ENCODE measurements at regions of chr4 and their contacts with region 1.

Region 1: GRCh38 chr4:7192252-7193029 is at the start of gene SORCS2:
- DNase-seq: peak; percentile 53 to 84 (median 78)
- ATAC-seq: peak; percentile 93
- H3K4me3 ChIP-seq: no peak within 1 kb of the TSS
- H3K27ac ChIP-seq: no peak within 1 kb of the TSS
- H3K4me1 ChIP-seq: peaks cover 0 to 10% of the 10 kb centered on the region in 2 experiments; a peak in 2 of 5 replicates
- H3K27me3 ChIP-seq: peaks cover 24 to 45% of the 10 kb centered on the region in 2 experiments; a peak in 4 of 5 replicates
- CTCF ChIP-seq: peak; percentile 32 to 68 (median 52); a peak in 3 of 6 replicates
- EP300 ChIP-seq: no peak
- POLR2A ChIP-seq: no peak
- RAD21 ChIP-seq: peak in 1 of 2 experiments; percentile 83; a peak in 3 of 4 replicates
- polyA plus RNA-seq, gene SORCS2: not detected

Region 2: GRCh38 chr4:7094916-7095315 is 97.5 kb before region 1 on chr4:
- CTCF ChIA-PET with region 1: no interaction called
- POLR2A ChIA-PET with region 1: no interaction called
- in situ Hi-C with region 1: no loop called
- intact Hi-C with region 1: no loop called
- DNase-seq: no peak
- ATAC-seq: peak; percentile 37; the same call in 2 of the 3 replicates
- H3K4me3 ChIP-seq: no peak overlapping the region
- H3K27ac ChIP-seq: no peak overlapping the region
- H3K4me1 ChIP-seq: peaks cover 0 to 6% of the 10 kb centered on the region in 2 experiments; a peak in 1 of 5 replicates
- H3K27me3 ChIP-seq: peaks cover 44 to 52% of the 10 kb centered on the region in 2 experiments
- CTCF ChIP-seq: no peak
- EP300 ChIP-seq: no peak
- POLR2A ChIP-seq: no peak
- RAD21 ChIP-seq: no peak

Region 3: DNA sequence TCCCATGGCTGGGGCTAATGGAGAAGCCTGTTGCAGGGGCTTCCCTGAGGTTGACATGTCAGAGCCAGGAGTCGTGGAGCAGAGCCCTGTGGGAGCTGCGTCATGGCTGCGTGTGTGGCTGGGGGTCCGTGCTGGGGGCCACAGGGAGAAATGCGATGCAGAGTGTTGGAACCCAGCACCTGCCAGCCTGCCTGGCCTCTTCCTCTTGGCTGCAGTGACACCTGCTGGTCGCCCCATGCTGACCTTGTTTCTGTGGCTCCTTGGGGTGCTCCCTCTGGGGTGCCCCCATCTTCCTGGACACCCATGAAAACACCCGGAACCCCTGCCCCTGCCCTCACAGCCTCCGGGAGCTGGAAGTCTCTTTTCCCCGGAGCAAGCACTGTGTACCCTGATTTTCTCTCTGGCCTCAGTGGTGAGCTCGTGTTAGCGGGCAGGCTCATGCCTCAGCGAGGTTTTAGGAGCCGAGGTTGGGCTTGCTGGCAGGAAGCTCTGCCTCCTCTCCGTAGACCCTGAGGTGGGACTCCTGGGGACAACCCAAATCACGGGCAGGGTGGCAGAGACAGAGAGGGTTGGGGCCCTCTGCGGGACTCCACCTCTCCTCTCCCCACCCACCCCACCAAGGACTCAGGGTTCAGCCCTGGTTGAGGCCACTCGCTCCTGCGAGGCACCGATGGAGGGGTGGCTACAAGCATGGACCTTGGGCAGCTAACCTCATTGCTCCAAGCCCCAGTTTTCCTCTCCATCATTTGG is 103.6 kb after region 1 on chr4:
- CTCF ChIA-PET with region 1: interaction called, 3 read pairs
- POLR2A ChIA-PET with region 1: no interaction called
- in situ Hi-C with region 1: no loop called
- intact Hi-C with region 1: loop called (anchors 10 kb)
- DNase-seq: peak; percentile 35 to 44 (median 36)
- ATAC-seq: peak; percentile 74
- H3K4me3 ChIP-seq: no peak overlapping the region
- H3K27ac ChIP-seq: no peak overlapping the region
- H3K4me1 ChIP-seq: no peaks in the 10 kb centered on the region
- H3K27me3 ChIP-seq: peaks cover 11 to 46% of the 10 kb centered on the region in 2 experiments; a peak in 4 of 5 replicates
- CTCF ChIP-seq: peak; percentile 57 to 68 (median 61)
- EP300 ChIP-seq: no peak
- POLR2A ChIP-seq: no peak
- RAD21 ChIP-seq: peak; percentile 47 to 66

Region 4: GRCh38 chr4:7335344-7336069 is 143.1 kb after region 1 on chr4:
- CTCF ChIA-PET with region 1: interaction called, 3 read pairs
- POLR2A ChIA-PET with region 1: no interaction called
- in situ Hi-C with region 1: no loop called
- intact Hi-C with region 1: loop called (anchors 2 kb)
- DNase-seq: peak; percentile 58 to 78 (median 72)
- ATAC-seq: peak; percentile 94
- H3K4me3 ChIP-seq: no peak overlapping the region
- H3K27ac ChIP-seq: no peak overlapping the region
- H3K4me1 ChIP-seq: peaks cover 0 to 9% of the 10 kb centered on the region in 2 experiments; a peak in 1 of 5 replicates
- H3K27me3 ChIP-seq: peaks cover 0 to 36% of the 10 kb centered on the region in 2 experiments; a peak in 3 of 5 replicates
- CTCF ChIP-seq: peak; percentile 74 to 78 (median 76)
- EP300 ChIP-seq: no peak
- POLR2A ChIP-seq: no peak
- RAD21 ChIP-seq: peak in 1 of 2 experiments; percentile 66; a peak in 2 of 4 replicates

Region 5: GRCh38 chr4:7719354-7720174 is 527.1 kb after region 1 on chr4:
- CTCF ChIA-PET with region 1: no interaction called
- POLR2A ChIA-PET with region 1: no interaction called
- in situ Hi-C with region 1: no loop called
- intact Hi-C with region 1: loop called (anchors 5 kb)
- DNase-seq: peak; percentile 58 to 79 (median 76)
- ATAC-seq: peak; percentile 96
- H3K4me3 ChIP-seq: no peak overlapping the region
- H3K27ac ChIP-seq: no peak overlapping the region
- H3K4me1 ChIP-seq: peaks cover 0 to 9% of the 10 kb centered on the region in 2 experiments; a peak in 1 of 5 replicates
- H3K27me3 ChIP-seq: peaks cover 18 to 42% of the 10 kb centered on the region in 2 experiments
- CTCF ChIP-seq: peak; percentile 69 to 76 (median 74)
- EP300 ChIP-seq: no peak
- POLR2A ChIP-seq: no peak
- RAD21 ChIP-seq: peak; percentile 33 to 68

Region 6: DNA sequence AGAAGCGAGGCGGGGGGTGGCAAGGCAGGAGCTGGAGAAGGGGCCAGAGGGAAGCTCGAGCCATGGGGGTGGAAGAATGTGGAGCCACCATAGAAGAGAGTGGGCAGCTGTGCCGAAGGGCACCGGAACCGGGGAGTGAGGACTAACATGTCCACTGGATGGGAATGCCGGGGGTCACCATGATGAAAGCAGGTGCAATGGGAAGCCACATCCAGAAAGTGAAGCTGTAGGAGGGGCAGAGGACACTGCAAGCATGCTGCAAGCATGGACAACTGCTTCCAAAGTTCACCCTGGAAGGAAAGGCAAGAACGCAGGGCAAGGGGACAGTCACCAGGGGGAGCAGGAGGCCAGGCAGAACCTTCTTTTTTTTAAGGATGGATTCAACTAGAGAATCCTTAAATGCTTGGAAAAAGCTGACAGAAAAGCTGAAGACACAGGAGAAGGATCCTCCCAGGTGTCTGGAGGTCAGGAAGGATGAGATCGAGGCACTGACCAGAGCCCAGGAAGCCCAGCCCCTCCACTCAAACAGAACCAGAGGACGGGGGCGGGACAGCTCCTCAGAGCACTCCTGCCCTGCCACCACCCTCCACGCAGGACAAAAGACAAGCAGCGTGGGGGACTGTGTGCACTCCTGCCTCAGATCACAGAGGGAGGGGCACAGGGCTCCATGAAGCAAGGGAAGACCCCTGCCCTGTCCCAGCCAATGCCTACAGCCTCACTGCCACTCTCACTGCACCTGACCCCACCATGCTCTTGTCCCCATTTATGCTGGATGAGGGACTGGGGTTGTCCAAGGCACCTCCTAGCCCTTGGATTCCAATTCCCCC is 578.0 kb after region 1 on chr4:
- CTCF ChIA-PET with region 1: no interaction called
- POLR2A ChIA-PET with region 1: no interaction called
- in situ Hi-C with region 1: no loop called
- intact Hi-C with region 1: no loop called
- DNase-seq: no peak
- ATAC-seq: no peak
- H3K4me3 ChIP-seq: no peak overlapping the region
- H3K27ac ChIP-seq: no peak overlapping the region
- H3K4me1 ChIP-seq: no peaks in the 10 kb centered on the region; a peak in 1 of 5 replicates
- H3K27me3 ChIP-seq: no peaks in the 10 kb centered on the region; a peak in 1 of 5 replicates
- CTCF ChIP-seq: peak; percentile 30 to 38 (median 37); a peak in 4 of 6 replicates
- EP300 ChIP-seq: no peak
- POLR2A ChIP-seq: no peak
- RAD21 ChIP-seq: peak in 1 of 2 experiments; percentile 49; a peak in 2 of 4 replicates

Measured in K562 (cell line).